Cardiac septum (tissue), 1 donor: ENCODE measurements at regions of chr11 and their contacts with region 1.

Region 1: GRCh38 chr11:2305140-2305840 is 3.5 kb downstream of the TSPAN32 start:
- DNase-seq: peak; percentile 96

Region 2: DNA sequence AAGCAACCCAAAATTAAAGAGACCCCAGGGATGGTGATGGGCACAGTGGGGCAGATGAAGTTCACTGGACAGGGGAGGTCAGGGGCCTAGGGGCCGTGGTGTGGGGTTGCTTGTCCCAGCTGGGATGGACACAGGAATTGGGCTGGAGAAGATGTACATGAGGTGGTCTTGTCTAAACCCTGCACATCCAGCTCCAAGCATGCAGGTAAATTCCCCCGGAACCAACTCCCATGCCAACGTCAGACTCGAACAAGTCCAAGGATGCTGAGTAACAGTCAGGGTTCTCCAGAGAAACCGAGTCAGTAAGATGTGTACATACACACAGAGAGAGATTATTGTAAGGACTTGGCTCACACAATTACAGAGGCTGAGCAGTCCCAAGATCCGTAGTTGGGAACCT is 25.4 kb after region 1 on chr11:
- intact Hi-C with region 1: no loop called
- DNase-seq: no peak

Region 3: DNA sequence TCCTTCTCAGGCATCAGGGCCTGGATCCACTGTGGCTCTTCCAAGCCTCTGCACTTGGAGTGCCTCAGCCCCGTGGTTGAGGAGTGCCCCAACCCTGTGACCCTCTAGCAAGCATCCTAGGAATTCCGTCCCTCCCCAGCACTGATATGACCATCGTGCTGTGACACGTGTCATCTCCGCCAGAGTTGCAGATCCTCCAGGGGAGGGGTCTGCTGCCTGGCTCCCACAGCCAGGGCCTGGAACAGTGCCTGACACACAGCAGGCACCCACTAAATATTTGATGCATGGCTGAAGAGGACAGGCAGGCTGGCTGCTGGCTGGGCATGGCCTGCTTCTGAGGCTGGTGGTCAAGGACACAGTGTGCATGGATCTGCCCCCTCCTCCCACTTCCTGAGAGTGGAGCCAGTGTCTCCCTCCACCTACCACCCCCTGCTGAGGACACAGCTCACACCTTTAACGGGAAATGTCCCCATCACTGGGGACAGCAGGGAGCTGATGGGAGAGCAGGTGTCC is 70.1 kb after region 1 on chr11:
- intact Hi-C with region 1: loop called (anchors 1 kb)
- DNase-seq: peak; percentile 86

Region 4: DNA sequence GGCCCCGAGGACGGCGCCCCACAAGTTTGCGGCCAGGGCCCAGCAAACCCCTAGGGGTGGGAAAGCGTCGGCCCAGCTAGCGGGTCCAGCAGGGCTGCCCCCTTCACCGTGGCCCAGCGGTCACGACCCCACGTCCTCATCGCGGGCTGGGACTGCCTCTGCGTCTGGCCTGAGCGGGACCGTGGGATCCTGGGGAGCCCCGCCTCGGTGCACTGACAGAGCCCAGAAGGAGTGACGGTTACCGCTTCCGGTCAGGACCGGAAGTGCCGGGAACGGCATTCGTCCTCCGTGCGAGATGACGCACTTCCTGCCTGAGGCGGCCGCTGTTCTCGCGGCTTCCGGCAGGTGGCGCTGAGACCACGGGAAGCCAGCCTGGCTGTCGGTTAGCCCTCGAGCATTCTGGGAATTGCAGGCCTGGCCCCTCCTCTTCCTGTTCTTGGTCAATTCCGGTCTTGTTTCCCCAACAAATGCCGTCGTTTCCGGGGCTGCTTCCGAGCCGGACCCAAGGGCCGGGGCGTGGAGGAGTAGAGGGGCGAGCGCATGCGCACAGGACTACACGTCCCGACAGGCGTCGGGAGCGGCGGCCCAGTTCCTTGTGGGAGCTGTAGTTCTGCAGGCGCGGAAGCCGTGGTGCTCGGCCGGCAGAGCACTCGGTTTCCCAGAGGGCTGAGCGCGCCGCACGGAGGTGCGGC is 94.9 kb after region 1 on chr11 and contains the start of gene TSSC4:
- intact Hi-C with region 1: loop called (anchors 5 kb)
- DNase-seq: peak; percentile 100
- total RNA-seq, gene TSSC4: 36.2 TPM

Region 5: DNA sequence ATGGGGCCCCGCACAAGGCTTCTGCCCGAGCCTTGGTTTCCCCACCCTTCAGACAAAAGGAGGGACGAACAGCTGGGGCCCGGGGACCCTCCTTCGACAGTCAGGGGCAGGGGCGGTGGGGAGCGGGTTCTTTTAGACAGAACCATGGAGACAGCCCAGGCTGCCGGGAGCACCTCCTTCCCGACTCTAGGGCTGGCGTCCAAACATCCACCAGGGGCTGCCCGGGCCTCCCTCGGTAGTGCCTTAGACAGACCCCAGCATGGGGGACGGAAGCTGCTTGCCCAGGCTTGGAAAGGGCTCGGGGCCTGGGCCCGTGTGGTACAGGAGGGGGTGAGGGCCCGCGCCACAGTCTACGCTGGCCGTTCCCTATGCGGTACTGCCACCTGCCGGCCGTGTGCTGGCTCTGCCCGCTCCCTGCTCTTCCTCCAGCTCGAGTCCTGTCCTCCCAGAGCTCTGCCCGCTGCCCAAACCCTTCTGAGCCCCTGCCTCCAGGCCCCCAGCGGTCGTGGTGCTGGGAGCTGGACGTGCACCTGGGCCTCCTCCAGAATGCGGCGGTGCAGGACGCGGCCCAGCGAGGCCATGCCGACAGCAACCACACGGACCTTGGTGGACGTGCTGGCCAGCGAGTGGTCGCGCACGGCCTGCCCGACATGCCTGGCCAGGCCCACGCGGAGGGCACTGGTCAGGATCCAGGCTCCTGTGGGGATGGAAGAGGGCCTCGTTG is 115.4 kb after region 1 on chr11:
- intact Hi-C with region 1: loop called (anchors 1 kb)
- DNase-seq: peak; percentile 89